IMR-90 (cell line): ENCODE measurements at regions of chr21 and their contacts with region 1.

Region 1: DNA sequence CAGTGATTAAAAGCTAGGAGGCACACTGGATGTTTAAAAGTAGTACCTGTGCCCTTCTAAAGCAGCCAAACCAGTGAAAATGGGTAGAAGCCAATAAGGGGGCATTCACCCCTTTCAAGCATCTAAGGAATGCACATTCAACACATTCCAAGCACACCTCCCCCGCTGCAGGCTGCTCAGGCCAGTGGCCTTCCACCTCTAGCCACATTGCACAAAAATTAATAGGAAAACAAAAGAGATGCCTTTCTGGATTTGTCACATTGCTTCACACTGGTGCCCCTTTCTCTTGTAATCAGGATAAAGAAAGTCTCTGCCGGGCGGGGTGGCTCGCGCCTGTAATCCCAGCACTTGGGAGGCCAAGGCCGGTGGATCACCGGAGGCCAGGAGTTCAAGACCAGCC is 834.0 kb downstream of the USP25 start:
- DNase-seq: no peak
- ATAC-seq: peak; percentile 65
- H3K4me3 ChIP-seq: no peak overlapping the region
- H3K27ac ChIP-seq: no peak overlapping the region
- H3K4me1 ChIP-seq: peaks cover 3% of the 10 kb centered on the region
- H3K27me3 ChIP-seq: no peaks in the 10 kb centered on the region
- CTCF ChIP-seq: no peak
- POLR2A ChIP-seq: no peak
- RAD21 ChIP-seq: no peak

Region 2: GRCh38 chr21:15379776-15380175 is 1184.0 kb before region 1 on chr21:
- CTCF ChIA-PET with region 1: no interaction called
- POLR2A ChIA-PET with region 1: no interaction called
- dilution Hi-C with region 1: no loop called
- in situ Hi-C with region 1: no loop called
- intact Hi-C with region 1: no loop called
- DNase-seq: no peak
- ATAC-seq: no peak
- H3K4me3 ChIP-seq: no peak overlapping the region
- H3K27ac ChIP-seq: no peak overlapping the region
- H3K4me1 ChIP-seq: no peaks in the 10 kb centered on the region
- H3K27me3 ChIP-seq: no peaks in the 10 kb centered on the region
- CTCF ChIP-seq: no peak
- POLR2A ChIP-seq: no peak
- RAD21 ChIP-seq: no peak

Region 3: GRCh38 chr21:16768096-16768495 is 204.3 kb after region 1 on chr21:
- CTCF ChIA-PET with region 1: no interaction called
- POLR2A ChIA-PET with region 1: no interaction called
- dilution Hi-C with region 1: no loop called
- in situ Hi-C with region 1: no loop called
- intact Hi-C with region 1: no loop called
- DNase-seq: no peak
- ATAC-seq: no peak
- H3K4me3 ChIP-seq: no peak overlapping the region
- H3K27ac ChIP-seq: no peak overlapping the region
- H3K4me1 ChIP-seq: peaks cover 4% of the 10 kb centered on the region
- H3K27me3 ChIP-seq: no peaks in the 10 kb centered on the region
- CTCF ChIP-seq: no peak
- POLR2A ChIP-seq: no peak
- RAD21 ChIP-seq: no peak

Region 4: GRCh38 chr21:17003763-17004373 is 440.1 kb after region 1 on chr21:
- CTCF ChIA-PET with region 1: no interaction called
- POLR2A ChIA-PET with region 1: no interaction called
- dilution Hi-C with region 1: no loop called
- in situ Hi-C with region 1: no loop called
- intact Hi-C with region 1: no loop called
- DNase-seq: peak; percentile 3
- ATAC-seq: peak; percentile 29; the same call in 1 of the 2 replicates
- H3K4me3 ChIP-seq: no peak overlapping the region
- H3K27ac ChIP-seq: no peak overlapping the region
- H3K4me1 ChIP-seq: no peaks in the 10 kb centered on the region; the same call in 1 of the 2 replicates
- H3K27me3 ChIP-seq: no peaks in the 10 kb centered on the region
- CTCF ChIP-seq: no peak
- POLR2A ChIP-seq: no peak
- RAD21 ChIP-seq: no peak

Region 5: DNA sequence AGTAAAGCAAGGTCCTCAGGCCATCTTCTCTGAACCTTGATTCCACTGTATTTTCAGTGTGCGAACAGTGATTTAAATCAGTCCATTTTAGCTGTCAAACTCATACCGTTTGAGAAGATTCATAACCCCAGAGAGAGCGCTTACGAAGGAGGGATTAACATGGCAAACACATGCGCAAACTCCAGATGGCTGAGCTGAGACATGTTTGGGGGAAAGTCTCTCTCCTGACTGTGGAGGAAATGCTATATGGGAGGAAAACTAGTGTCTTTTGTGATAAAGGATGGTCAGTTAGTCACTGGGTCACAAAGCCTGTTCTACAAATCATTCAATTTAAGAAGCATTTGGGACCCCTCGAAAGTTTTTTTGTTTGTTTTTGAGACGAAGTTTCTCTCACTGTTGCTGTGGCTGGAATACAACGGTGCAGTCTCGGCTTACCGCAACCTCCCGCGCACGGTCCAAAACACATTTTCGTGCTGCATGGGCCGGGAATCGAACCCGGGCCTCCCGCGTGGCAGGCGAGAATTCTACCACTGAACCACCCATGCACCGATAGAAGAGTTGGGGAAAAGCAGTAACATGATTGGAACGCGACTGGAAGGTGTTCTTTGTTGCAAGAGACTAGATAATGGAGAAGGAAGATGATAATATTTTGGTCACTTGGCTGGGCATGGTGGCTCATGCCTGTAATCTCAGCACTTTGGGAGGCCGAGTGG is 890.7 kb after region 1 on chr21:
- CTCF ChIA-PET with region 1: no interaction called
- POLR2A ChIA-PET with region 1: no interaction called
- dilution Hi-C with region 1: no loop called
- in situ Hi-C with region 1: loop called (anchors 25 kb)
- intact Hi-C with region 1: no loop called
- DNase-seq: peak; percentile 92
- ATAC-seq: peak; percentile 97
- H3K4me3 ChIP-seq: no peak overlapping the region
- H3K27ac ChIP-seq: no peak overlapping the region
- H3K4me1 ChIP-seq: peaks cover 3% of the 10 kb centered on the region; the same call in 1 of the 2 replicates
- H3K27me3 ChIP-seq: no peaks in the 10 kb centered on the region
- CTCF ChIP-seq: no peak
- POLR2A ChIP-seq: no peak
- RAD21 ChIP-seq: no peak